Gastrocnemius medialis (tissue), 4 donors: ENCODE measurements at regions of chr20 and their contacts with region 1.

Region 1: DNA sequence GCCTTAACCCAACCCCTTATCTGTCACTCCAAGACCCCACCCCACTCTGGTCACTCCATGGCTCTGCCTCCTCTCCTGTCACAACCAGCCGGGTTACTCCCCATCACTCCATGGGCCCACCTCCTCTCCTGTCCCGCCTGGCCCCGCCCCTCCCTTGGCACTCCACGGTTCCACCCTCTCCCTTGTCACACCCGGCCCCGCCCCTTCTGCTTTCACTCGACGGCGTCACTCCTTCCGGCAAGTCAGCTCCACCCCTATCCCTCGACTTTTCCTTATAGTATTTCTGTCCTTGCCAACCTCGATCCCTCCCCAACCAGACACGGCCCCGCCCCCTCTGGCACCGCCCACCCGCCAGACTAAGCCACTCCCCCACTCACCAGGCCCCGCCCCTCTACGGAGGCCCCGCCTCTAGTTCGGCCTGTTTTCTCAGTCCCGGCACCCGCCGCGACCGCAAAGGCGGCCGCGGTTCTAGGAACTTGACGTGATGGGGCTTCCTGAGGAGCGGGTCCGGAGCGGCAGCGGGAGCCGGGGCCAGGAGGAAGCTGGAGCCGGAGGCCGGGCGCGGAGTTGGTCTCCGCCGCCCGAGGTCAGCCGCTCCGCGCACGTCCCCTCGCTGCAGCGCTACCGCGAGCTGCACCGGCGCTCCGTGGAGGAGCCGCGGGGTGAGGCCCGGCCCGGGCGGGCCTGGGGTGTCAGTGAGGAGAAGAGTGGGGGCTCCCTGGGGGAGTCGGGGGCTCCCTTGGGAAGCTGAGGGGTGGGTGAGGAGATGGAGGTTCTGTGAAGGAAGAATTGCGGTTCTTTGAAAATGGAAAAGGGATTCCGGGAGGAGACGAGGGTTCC is at the start of gene ACSS2:
- DNase-seq: peak; percentile 98 to 99
- ATAC-seq: peak; percentile 77 to 83
- H3K4me3 ChIP-seq: peak within 1 kb of the TSS; percentile 73 to 92 (median 83)
- H3K27ac ChIP-seq: peak within 1 kb of the TSS; percentile 87 to 97 (median 96)
- H3K4me1 ChIP-seq: peaks cover 44 to 54% of the 10 kb centered on the region in 2 donors
- H3K27me3 ChIP-seq: no peaks in the 10 kb centered on the region
- CTCF ChIP-seq: peak in 1 of 5 experiments; percentile 14
- POLR2A ChIP-seq: peak; percentile 90 to 94
- total RNA-seq, gene ACSS2: 70.5 to 94.7 (median 88.1) TPM

Region 2: GRCh38 chr20:34825530-34826362 is 50.6 kb before region 1 on chr20 and contains the start of gene NCOA6:
- in situ Hi-C with region 1: no loop called
- intact Hi-C with region 1: loop called (anchors 2 kb)
- DNase-seq: peak; percentile 86 to 90
- ATAC-seq: peak; percentile 81 to 86
- H3K4me3 ChIP-seq: peak within 1 kb of the TSS; percentile 76 to 93 (median 88)
- H3K27ac ChIP-seq: peak within 1 kb of the TSS; percentile 84 to 97 (median 94)
- H3K4me1 ChIP-seq: peaks cover 31 to 33% of the 10 kb centered on the region in 2 donors
- H3K27me3 ChIP-seq: no peaks in the 10 kb centered on the region
- CTCF ChIP-seq: no peak
- POLR2A ChIP-seq: peak in 1 of 2 donors; percentile 71
- total RNA-seq, gene NCOA6: 10.9 to 12.7 (median 11.6) TPM

Region 3: GRCh38 chr20:34922654-34923424 is 46.5 kb after region 1 on chr20:
- in situ Hi-C with region 1: no loop called
- intact Hi-C with region 1: loop called (anchors 1 kb)
- DNase-seq: peak; percentile 59 to 76
- ATAC-seq: peak; percentile 90 to 95
- H3K4me3 ChIP-seq: peak overlapping the region in 1 of 4 donors; percentile 8
- H3K27ac ChIP-seq: peak overlapping the region; percentile 79 to 92 (median 89)
- H3K4me1 ChIP-seq: peaks cover 40 to 43% of the 10 kb centered on the region in 2 donors
- H3K27me3 ChIP-seq: no peaks in the 10 kb centered on the region
- CTCF ChIP-seq: no peak
- POLR2A ChIP-seq: no peak

Region 4: DNA sequence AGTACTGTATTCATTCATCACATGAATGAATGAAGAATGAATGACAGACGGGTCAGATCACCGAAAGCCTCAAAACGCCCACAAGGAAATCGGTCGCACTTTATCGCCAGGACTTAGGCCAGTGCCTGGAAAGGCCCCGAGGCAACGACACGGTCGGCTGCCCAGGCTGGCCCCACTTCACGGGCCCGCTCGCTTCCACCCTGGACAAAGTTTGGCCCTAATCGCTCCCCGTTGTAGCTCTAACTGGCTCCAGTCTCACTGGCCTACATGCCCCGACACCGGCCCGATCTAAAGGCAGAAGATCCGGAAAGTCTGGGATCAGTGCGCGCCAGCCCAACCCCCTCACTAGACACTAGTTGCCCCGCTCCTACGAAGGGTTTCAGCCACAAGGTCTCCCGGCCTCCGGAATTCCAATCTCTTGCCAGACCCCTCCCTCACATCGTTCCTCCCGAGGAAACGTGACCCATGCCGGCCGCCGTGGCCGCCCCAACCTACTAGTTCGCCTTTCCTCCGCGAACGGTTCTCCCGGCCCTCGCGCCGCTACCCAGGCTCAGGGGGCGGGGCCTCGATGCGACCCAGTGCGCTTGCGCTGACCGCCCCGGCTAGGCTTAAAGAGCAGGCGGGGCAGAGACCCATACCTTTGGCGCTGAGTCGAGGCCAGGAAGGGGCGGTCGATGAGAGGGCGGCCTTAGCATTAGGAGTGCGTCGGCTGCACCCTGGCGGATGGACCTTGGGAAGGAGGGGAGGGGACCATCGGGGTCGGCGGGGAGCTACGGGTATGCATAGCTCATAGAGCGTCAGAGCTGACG is 79.1 kb after region 1 on chr20 and contains the starts of genes GSS and MYH7B:
- in situ Hi-C with region 1: loop called (anchors 5 kb)
- intact Hi-C with region 1: loop called (anchors 1 kb)
- DNase-seq: peak; percentile 94 to 97
- ATAC-seq: peak; percentile 80 to 88
- H3K4me3 ChIP-seq: peak within 1 kb of the TSS; percentile 58 to 97 (median 80)
- H3K27ac ChIP-seq: peak within 1 kb of the TSS; percentile 83 to 98 (median 91)
- H3K4me1 ChIP-seq: peaks cover 27 to 53% of the 10 kb centered on the region in 2 donors
- H3K27me3 ChIP-seq: no peaks in the 10 kb centered on the region
- CTCF ChIP-seq: peak; percentile 53 to 74 (median 64)
- POLR2A ChIP-seq: peak; percentile 79 to 91
- total RNA-seq, gene GSS: 14.1 to 33.0 (median 23.8) TPM
- total RNA-seq, gene MYH7B: 1.6 to 8.5 (median 3.3) TPM

Region 5: GRCh38 chr20:34964486-34964885 is 88.1 kb after region 1 on chr20:
- in situ Hi-C with region 1: loop called (anchors 5 kb)
- intact Hi-C with region 1: no loop called
- DNase-seq: no peak
- ATAC-seq: no peak
- H3K4me3 ChIP-seq: no peak overlapping the region
- H3K27ac ChIP-seq: no peak overlapping the region
- H3K4me1 ChIP-seq: peaks cover 10 to 17% of the 10 kb centered on the region in 2 donors
- H3K27me3 ChIP-seq: no peaks in the 10 kb centered on the region
- CTCF ChIP-seq: no peak
- POLR2A ChIP-seq: no peak

Region 6: GRCh38 chr20:35015206-35016193 is 139.1 kb after region 1 on chr20:
- in situ Hi-C with region 1: no loop called
- intact Hi-C with region 1: loop called (anchors 5 kb)
- DNase-seq: peak in 1 of 2 donors; percentile 88
- ATAC-seq: peak; percentile 58 to 63
- H3K4me3 ChIP-seq: no peak overlapping the region
- H3K27ac ChIP-seq: peak overlapping the region; percentile 85 to 95 (median 90)
- H3K4me1 ChIP-seq: peaks cover 34 to 54% of the 10 kb centered on the region in 2 donors
- H3K27me3 ChIP-seq: no peaks in the 10 kb centered on the region
- CTCF ChIP-seq: no peak
- POLR2A ChIP-seq: peak; percentile 18 to 26